CD8-positive, alpha-beta T cell (primary cell): ENCODE measurements at regions of chr5 and their contacts with region 1.

Region 1: GRCh38 chr5:151447174-151448037 is at the start of gene SLC36A1:
- DNase-seq: peak; percentile 80 to 94 (median 91)
- ATAC-seq: peak; percentile 98
- H3K4me3 ChIP-seq: peak within 1 kb of the TSS; percentile 83 to 89
- H3K4me3 Mint-ChIP-seq: peak within 1 kb of the TSS; percentile 94
- H3K27ac ChIP-seq: peak within 1 kb of the TSS; percentile 55 to 68
- H3K27ac Mint-ChIP-seq: peak within 1 kb of the TSS; percentile 89
- H3K4me1 ChIP-seq: peaks cover 8% of the 10 kb centered on the region
- H3K4me1 Mint-ChIP-seq: peaks cover 24% of the 10 kb centered on the region
- H3K27me3 ChIP-seq: peaks cover 0 to 5% of the 10 kb centered on the region in 2 experiments
- H3K27me3 Mint-ChIP-seq: peaks cover 19% of the 10 kb centered on the region
- CTCF ChIP-seq: peak; percentile 96
- total RNA-seq, gene SLC36A1: 1.5 to 2.4 TPM

Region 2: DNA sequence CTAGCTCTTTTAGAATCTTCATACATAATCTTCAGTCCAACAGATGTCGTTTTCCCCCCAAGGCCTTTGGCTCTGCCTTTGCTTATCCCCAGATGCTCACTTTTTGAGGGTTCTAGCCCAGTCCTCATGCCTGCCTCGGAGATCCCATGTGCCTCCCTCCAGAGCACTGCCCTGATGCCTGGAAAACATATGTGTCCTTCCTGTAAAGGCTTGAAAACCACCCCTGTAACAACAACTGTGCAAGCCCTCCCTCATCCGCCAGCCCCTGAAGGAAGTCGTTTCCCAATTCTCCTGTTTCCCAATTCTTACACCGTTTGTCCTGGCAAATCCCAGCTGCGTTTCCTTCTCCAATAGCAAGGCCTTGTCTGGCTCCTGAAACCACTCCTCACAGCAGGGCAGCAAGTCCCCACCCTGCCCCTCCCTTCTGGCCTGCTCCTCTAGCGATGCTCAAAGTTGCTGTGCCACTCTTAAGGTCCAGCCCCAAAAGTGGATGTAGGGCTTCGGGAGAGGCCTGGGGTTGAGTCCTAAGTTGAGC is 52.2 kb after region 1 on chr5:
- CTCF ChIA-PET with region 1: interaction called, 34 read pairs
- POLR2A ChIA-PET with region 1: interaction called, 6 read pairs
- intact Hi-C with region 1: loop called (anchors 1 kb)
- DNase-seq: no peak
- ATAC-seq: no peak
- H3K4me3 ChIP-seq: no peak overlapping the region
- H3K4me3 Mint-ChIP-seq: no peak overlapping the region
- H3K27ac ChIP-seq: no peak overlapping the region
- H3K27ac Mint-ChIP-seq: no peak overlapping the region
- H3K4me1 ChIP-seq: no peaks in the 10 kb centered on the region
- H3K4me1 Mint-ChIP-seq: peaks cover 5% of the 10 kb centered on the region
- H3K27me3 ChIP-seq: no peaks in the 10 kb centered on the region
- H3K27me3 Mint-ChIP-seq: no peaks in the 10 kb centered on the region
- CTCF ChIP-seq: no peak

Region 3: DNA sequence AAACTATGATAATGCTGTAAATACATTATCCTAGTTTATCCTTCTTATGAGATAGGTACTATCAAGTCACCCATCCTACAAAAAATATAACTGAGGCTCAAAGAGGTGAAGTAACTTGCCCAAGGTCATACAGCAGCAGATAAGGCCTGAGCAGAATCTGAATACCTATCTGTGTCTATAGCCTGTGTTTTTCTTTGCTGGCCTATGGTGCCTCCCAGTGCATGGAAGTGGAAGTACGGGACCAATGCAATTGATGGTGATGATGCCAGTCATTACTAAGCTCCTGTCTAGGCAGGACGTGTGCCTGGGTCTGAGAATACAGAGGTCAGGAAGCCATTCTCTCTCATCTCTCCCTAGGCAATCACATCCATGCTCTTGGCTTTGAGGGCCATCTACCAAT is 75.9 kb after region 1 on chr5:
- CTCF ChIA-PET with region 1: interaction called, 10 read pairs
- POLR2A ChIA-PET with region 1: no interaction called
- intact Hi-C with region 1: loop called (anchors 1 kb)
- DNase-seq: peak in 2 of 9 experiments; percentile 36 to 51
- ATAC-seq: peak; percentile 52
- H3K4me3 ChIP-seq: no peak overlapping the region
- H3K4me3 Mint-ChIP-seq: no peak overlapping the region
- H3K27ac ChIP-seq: no peak overlapping the region
- H3K27ac Mint-ChIP-seq: no peak overlapping the region
- H3K4me1 ChIP-seq: no peaks in the 10 kb centered on the region
- H3K4me1 Mint-ChIP-seq: no peaks in the 10 kb centered on the region
- H3K27me3 ChIP-seq: no peaks in the 10 kb centered on the region
- H3K27me3 Mint-ChIP-seq: no peaks in the 10 kb centered on the region
- CTCF ChIP-seq: peak; percentile 40

Region 4: GRCh38 chr5:151740336-151740942 is 293.0 kb after region 1 on chr5:
- CTCF ChIA-PET with region 1: no interaction called
- POLR2A ChIA-PET with region 1: no interaction called
- intact Hi-C with region 1: loop called (anchors 1 to 2 kb)
- DNase-seq: peak; percentile 10 to 74 (median 38)
- ATAC-seq: peak; percentile 71
- H3K4me3 ChIP-seq: no peak overlapping the region
- H3K4me3 Mint-ChIP-seq: no peak overlapping the region
- H3K27ac ChIP-seq: no peak overlapping the region
- H3K27ac Mint-ChIP-seq: no peak overlapping the region
- H3K4me1 ChIP-seq: peaks cover 14% of the 10 kb centered on the region
- H3K4me1 Mint-ChIP-seq: peaks cover 18% of the 10 kb centered on the region
- H3K27me3 ChIP-seq: no peaks in the 10 kb centered on the region
- H3K27me3 Mint-ChIP-seq: no peaks in the 10 kb centered on the region
- CTCF ChIP-seq: peak; percentile 79

Region 5: DNA sequence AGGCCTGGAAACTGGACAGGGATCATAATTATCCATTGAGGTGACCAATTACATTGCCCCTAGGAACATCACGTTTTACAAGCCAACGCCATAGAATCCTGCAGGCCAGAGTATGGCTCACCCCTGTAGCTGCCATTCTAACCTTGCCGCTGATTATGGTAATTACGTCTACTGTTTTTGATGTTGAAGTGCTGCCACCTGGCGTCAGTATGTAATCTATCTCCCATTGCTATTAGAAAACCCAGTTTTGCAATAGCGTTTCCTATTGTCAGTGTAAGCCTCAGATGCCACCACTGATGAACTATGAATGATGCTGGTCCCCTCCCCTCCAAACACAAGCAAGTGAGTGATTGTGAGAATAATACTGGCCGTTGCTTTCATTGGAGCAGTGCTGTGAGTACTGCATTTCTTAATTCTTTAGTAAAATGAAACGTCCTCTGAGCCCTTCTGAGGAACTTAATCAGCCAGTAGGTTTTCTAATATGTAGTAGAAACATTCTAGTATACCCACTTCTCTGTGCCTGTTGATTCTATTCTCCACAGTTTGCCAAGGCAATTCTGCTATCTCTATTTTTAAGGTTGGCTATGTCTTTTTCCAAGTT is 1058.1 kb after region 1 on chr5:
- CTCF ChIA-PET with region 1: no interaction called
- POLR2A ChIA-PET with region 1: no interaction called
- intact Hi-C with region 1: loop called in 1 of 2 experiments (anchors 5 kb)
- DNase-seq: peak in 5 of 9 experiments; percentile 5 to 61 (median 30)
- ATAC-seq: no peak
- H3K4me3 ChIP-seq: no peak overlapping the region
- H3K4me3 Mint-ChIP-seq: no peak overlapping the region
- H3K27ac ChIP-seq: no peak overlapping the region
- H3K27ac Mint-ChIP-seq: no peak overlapping the region
- H3K4me1 ChIP-seq: no peaks in the 10 kb centered on the region
- H3K4me1 Mint-ChIP-seq: no peaks in the 10 kb centered on the region
- H3K27me3 ChIP-seq: no peaks in the 10 kb centered on the region
- H3K27me3 Mint-ChIP-seq: peaks cover 21% of the 10 kb centered on the region
- CTCF ChIP-seq: no peak